Activated CD4-positive, alpha-beta T cell treated with anti-CD3 and anti-CD28 coated beads for 36 hours (primary cell): ENCODE measurements at regions of chr4 and their contacts with region 1.

Region 1: GRCh38 chr4:48127682-48128394 is 6.2 kb downstream of the TXK start:
- DNase-seq: peak; percentile 91
- ATAC-seq: peak; percentile 76
- H3K4me3 Mint-ChIP-seq: peak overlapping the region; percentile 81
- H3K27ac Mint-ChIP-seq: peak overlapping the region; percentile 97
- H3K4me1 Mint-ChIP-seq: peaks cover 88% of the 10 kb centered on the region
- H3K27me3 Mint-ChIP-seq: no peaks in the 10 kb centered on the region

Region 2: DNA sequence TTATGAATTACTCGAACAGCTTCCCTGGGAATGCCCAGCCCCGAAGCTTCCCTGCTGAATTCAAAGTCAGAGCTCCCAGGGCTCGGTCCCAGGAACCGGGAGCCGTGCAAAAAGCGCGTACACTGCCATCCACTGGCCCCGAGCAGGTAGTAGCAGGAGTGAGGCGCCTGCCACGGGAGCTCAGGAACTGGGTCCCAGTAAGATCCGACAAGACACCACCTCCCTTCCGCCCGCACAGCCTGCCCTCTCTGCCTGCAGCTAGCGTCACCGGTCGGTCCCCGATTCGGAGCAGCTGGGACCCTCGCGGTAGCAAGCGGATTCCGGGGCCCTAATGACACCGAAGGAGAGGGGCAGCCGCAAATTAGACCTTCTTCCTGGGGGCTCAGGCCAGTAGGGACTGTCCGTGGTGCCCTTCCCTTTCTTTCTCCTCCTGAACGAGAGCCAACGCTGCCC is 291.2 kb before region 1 on chr4:
- CTCF ChIA-PET with region 1: interaction called, 5 read pairs
- POLR2A ChIA-PET with region 1: no interaction called
- intact Hi-C with region 1: loop called in 1 of 2 experiments (anchors 5 kb)
- DNase-seq: peak; percentile 78
- ATAC-seq: peak; percentile 73
- H3K4me3 Mint-ChIP-seq: peak overlapping the region; percentile 71
- H3K27ac Mint-ChIP-seq: no peak overlapping the region
- H3K4me1 Mint-ChIP-seq: peaks cover 26% of the 10 kb centered on the region
- H3K27me3 Mint-ChIP-seq: peaks cover 5% of the 10 kb centered on the region

Region 3: DNA sequence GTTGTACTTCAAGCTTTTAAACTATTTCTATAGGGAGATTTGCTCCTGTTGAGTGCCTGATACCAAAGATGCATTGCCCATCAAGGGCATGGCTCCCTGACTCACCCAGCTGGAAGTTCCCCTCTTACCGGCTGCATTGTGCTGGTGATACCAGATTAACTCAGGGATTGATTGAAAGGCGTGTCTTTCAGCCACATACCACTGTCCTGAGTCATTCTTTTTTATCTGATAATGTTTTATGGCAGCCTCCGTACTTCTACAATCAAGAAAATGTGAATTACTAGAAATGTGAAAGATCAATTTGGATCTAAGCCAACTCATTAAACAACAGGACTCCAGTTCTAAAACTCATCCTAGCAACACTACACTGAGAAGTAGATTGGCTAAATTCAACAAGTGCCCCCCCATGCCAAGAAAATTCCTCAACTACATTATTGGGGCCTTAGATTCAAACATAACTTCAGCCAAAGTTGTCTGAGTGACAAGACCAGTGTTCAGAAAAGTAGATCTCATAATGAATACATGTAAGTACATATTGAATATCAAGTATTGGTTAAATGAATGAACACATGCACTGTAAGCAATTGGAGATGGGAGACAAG is 33.8 kb before region 1 on chr4:
- CTCF ChIA-PET with region 1: interaction called, 4 read pairs
- POLR2A ChIA-PET with region 1: no interaction called
- intact Hi-C with region 1: loop called in 1 of 2 experiments (anchors 5 kb)
- DNase-seq: peak; percentile 75
- ATAC-seq: peak; percentile 100
- H3K4me3 Mint-ChIP-seq: no peak overlapping the region
- H3K27ac Mint-ChIP-seq: peak overlapping the region; percentile 56
- H3K4me1 Mint-ChIP-seq: peaks cover 22% of the 10 kb centered on the region
- H3K27me3 Mint-ChIP-seq: no peaks in the 10 kb centered on the region

Region 4: GRCh38 chr4:48116582-48116981 is 11.3 kb before region 1 on chr4:
- CTCF ChIA-PET with region 1: interaction called, 16 read pairs
- POLR2A ChIA-PET with region 1: no interaction called
- intact Hi-C with region 1: no loop called
- DNase-seq: no peak
- ATAC-seq: no peak
- H3K4me3 Mint-ChIP-seq: no peak overlapping the region
- H3K27ac Mint-ChIP-seq: peak overlapping the region; percentile 43
- H3K4me1 Mint-ChIP-seq: peaks cover 63% of the 10 kb centered on the region
- H3K27me3 Mint-ChIP-seq: no peaks in the 10 kb centered on the region

Region 5: GRCh38 chr4:48195374-48195773 is 67.5 kb after region 1 on chr4:
- CTCF ChIA-PET with region 1: no interaction called
- POLR2A ChIA-PET with region 1: no interaction called
- intact Hi-C with region 1: no loop called
- DNase-seq: no peak
- ATAC-seq: peak; percentile 51
- H3K4me3 Mint-ChIP-seq: no peak overlapping the region
- H3K27ac Mint-ChIP-seq: no peak overlapping the region
- H3K4me1 Mint-ChIP-seq: peaks cover 7% of the 10 kb centered on the region
- H3K27me3 Mint-ChIP-seq: no peaks in the 10 kb centered on the region

Region 6: GRCh38 chr4:48269861-48270522 is 142.2 kb after region 1 on chr4:
- CTCF ChIA-PET with region 1: interaction called, 5 read pairs
- POLR2A ChIA-PET with region 1: no interaction called
- intact Hi-C with region 1: loop called (anchors 1 to 2 kb)
- DNase-seq: peak; percentile 97
- ATAC-seq: peak; percentile 95
- H3K4me3 Mint-ChIP-seq: peak overlapping the region; percentile 89
- H3K27ac Mint-ChIP-seq: peak overlapping the region; percentile 93
- H3K4me1 Mint-ChIP-seq: peaks cover 17% of the 10 kb centered on the region
- H3K27me3 Mint-ChIP-seq: no peaks in the 10 kb centered on the region

Region 7: GRCh38 chr4:48830706-48831531 is 703.1 kb after region 1 on chr4 and contains the start of gene OCIAD1:
- CTCF ChIA-PET with region 1: no interaction called
- POLR2A ChIA-PET with region 1: no interaction called
- intact Hi-C with region 1: loop called in 1 of 2 experiments (anchors 5 kb)
- DNase-seq: peak; percentile 96
- ATAC-seq: peak; percentile 99
- H3K4me3 Mint-ChIP-seq: peak within 1 kb of the TSS; percentile 100
- H3K27ac Mint-ChIP-seq: peak within 1 kb of the TSS; percentile 100
- H3K4me1 Mint-ChIP-seq: peaks cover 23% of the 10 kb centered on the region
- H3K27me3 Mint-ChIP-seq: no peaks in the 10 kb centered on the region
- total RNA-seq, gene OCIAD1: 113 to 162 TPM